ENCODE measurements at regions of chr14 and their contacts with region 1.

Region 1: GRCh38 chr14:36485773-36486172 is 34.3 kb downstream of the NKX2-1 start:
- DNase-seq: no peak
- ATAC-seq: peak; percentile 56
- H3K4me3 ChIP-seq: no peak overlapping the region
- H3K27ac ChIP-seq: no peak overlapping the region
- H3K4me1 ChIP-seq: no peaks in the 10 kb centered on the region; the same call in 1 of the 2 replicates
- H3K27me3 ChIP-seq: 0 out of 4 replicates have a peak, but pooled peaks cover 0 to 1% of the 10 kb centered on the region in 2 experiments
- CTCF ChIP-seq: no peak
- EP300 ChIP-seq: no peak
- POLR2A ChIP-seq: no peak
- RAD21 ChIP-seq: no peak

Region 2: DNA sequence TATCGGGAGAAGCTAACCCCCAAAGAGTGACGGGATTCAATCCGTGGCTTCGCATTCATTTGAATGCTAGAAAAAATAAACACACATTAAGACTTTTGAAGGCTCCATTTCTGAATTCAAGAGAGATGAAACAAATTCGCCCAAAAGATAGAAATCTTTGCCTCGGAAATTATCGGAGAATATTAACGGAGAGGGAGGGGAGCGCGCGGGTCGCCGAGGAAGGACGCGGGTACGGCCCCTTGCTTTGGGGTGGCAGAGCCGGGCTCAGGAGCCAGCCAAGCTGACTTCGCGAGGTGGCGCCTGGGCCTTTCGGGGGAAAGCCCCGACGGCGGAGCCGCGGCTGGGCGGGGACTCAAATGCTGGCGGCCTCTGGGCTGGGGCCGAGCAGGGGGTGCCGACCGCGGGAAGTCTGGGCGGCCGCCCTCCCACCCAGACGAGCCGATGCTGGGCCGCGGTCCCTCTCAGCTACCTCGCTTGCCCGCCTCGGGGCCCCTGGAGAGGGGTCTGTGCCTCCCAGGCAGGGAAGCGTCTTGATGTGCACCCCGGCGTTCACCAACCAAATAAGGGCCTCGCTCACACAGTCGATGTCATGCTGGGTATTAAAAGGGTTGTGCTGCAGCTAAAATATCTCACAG is 19.5 kb after region 1 on chr14:
- CTCF ChIA-PET with region 1: no interaction called
- POLR2A ChIA-PET with region 1: no interaction called
- RAD21 ChIA-PET with region 1: no interaction called
- SMC1A ChIA-PET with region 1: no interaction called
- in situ Hi-C with region 1: no loop called
- intact Hi-C with region 1: loop called (anchors 1 kb)
- DNase-seq: no peak
- ATAC-seq: peak; percentile 80
- H3K4me3 ChIP-seq: no peak overlapping the region
- H3K27ac ChIP-seq: no peak overlapping the region
- H3K4me1 ChIP-seq: no peaks in the 10 kb centered on the region
- H3K27me3 ChIP-seq: peaks cover 2 to 5% of the 10 kb centered on the region in 2 experiments; a peak in 3 of 4 replicates
- CTCF ChIP-seq: no peak
- EP300 ChIP-seq: no peak
- POLR2A ChIP-seq: no peak
- RAD21 ChIP-seq: no peak